ENCODE measurements at regions of chr1 and their contacts with region 1.

Region 1: DNA sequence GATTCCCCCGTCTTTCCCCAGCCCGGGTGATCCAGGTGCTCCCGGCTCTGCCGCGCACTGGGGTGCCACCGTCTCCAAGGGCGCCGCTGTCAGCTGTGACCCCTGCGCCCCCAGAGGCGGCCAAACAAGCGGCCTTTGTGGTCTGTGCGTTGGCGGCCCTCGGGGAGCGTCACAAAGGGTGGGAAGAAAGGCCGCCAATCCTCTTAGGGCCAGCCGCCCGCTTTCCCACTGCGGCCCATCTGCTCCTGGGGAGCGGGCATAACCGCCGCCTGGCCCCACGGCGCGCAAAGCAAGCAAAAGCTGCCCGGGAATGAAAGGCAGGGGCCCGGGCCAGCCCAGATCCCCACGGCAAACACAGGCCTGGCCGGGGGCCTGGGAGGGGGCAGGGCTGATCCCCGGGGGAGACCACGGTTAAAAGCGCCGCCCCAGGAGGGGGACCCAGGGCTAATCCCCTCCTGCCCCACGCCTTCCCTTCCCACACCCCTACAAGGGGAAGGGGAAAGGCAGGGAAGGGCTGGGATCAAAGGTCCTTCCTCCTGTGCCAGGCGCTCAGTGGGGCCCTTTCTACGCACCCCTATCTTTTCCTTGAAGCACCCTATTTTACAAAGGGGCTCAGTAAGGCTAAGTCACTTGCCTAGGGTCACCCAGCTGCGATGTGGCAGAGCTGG is 24.0 kb downstream of the C1QB start:
- DNase-seq: no peak
- ATAC-seq: no peak

Region 2: GRCh38 chr1:22451702-22452474 is 225.2 kb before region 1 on chr1 and contains the start of gene ZBTB40:
- intact Hi-C with region 1: no loop called
- DNase-seq: peak; percentile 99
- ATAC-seq: peak; percentile 97
- total RNA-seq, gene ZBTB40: 15.0 TPM

Region 3: DNA sequence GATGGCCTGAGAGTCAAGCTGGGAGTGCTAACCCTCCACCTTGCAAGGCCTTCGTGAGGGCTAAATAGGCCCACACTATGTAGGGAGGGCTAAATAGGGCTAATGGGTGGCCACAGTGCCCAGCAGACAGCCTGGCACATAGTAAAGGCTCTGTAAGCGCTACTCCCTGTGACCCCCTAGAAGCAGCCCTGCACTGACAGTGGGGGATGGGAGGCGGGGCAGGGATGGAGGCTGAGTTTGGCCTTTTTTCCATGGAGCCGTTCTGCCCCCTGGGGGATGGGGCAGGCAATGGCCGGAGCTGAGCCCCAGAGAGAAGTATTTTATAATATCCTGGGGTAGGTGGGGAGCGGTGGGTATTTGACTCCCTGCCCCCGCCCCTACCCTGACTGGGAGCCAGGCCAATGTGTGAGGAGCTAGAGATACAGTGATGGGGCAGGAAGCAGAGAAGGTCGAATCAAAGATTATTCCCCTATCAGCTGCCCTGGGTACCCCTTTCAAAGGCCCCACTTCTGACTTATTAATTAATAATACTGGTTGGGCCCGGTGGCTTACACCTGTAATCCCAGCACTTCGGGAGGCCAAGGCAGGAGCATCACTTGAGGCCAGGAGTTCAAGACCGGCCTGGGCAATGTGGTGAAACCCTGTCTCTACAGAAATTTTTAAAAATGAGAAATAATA is 253.3 kb after region 1 on chr1:
- intact Hi-C with region 1: loop called (anchors 5 kb)
- DNase-seq: peak; percentile 56
- ATAC-seq: peak; percentile 87